ENCODE measurements at regions of chr15 and their contacts with region 1.

Region 1: GRCh38 chr15:63405683-63406390 is 24.2 kb upstream of the CA12 start:
- DNase-seq: no peak
- ATAC-seq: no peak

Region 2: DNA sequence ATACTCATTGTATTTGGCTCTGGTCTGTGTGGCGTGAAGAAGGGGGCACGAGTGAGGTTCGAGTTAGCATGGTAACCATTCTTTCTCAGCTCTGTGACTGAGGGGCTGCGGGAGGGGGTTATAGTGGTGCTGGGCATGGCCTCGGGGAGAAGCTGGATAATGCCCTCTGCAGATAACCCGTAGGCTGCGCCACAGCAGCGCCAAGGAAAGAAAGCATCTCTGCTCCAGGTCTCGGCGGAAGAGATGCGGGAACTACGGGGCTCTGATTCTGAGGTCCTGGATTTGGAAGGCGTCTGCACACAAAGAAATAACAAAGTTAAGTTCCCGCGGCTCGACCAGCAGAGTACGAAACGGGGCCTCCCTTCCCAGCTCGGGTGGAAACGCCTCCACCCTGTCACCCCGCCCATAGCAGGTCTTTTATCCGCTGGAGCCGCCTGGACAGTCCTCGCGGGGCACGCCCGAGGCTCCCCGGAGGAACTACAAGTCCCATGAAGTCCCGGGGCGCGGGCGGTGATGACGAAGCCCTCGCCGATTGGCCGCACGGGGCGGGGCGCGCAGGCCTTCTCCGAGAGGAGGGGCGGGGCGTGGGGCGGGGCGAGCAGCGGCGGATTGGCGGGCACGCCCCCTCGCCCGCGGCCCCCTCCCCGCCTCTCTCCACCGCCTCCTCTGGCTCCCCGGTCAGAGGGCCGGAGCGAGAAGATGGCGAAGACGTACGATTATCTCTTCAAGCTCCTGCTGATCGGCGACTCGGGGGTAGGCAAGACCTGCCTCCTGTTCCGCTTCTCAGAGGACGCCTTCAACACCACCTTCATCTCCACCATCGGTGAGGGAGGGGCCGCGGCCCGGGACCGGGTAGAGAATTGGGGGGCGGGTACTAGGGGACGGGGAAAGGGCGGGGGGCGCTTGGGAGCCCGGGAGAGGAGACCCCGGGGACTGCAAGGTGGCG is 216.6 kb before region 1 on chr15 and contains the start of gene RAB8B:
- intact Hi-C with region 1: no loop called
- DNase-seq: peak; percentile 99
- ATAC-seq: peak; percentile 99
- total RNA-seq, gene RAB8B: 10.0 TPM

Region 3: GRCh38 chr15:63291507-63291906 is 114.3 kb before region 1 on chr15:
- intact Hi-C with region 1: loop called (anchors 2 kb)
- DNase-seq: no peak
- ATAC-seq: no peak

Measured in Right ventricle myocardium superior (tissue), 1 donor.